GM18951 (cell line): ENCODE measurements at regions of chrX and their contacts with region 1.

Region 1: GRCh38 chrX:13087322-13088155 is 43.1 kb upstream of the FAM9C start:
- POLR2A ChIP-seq: no peak

Region 2: DNA sequence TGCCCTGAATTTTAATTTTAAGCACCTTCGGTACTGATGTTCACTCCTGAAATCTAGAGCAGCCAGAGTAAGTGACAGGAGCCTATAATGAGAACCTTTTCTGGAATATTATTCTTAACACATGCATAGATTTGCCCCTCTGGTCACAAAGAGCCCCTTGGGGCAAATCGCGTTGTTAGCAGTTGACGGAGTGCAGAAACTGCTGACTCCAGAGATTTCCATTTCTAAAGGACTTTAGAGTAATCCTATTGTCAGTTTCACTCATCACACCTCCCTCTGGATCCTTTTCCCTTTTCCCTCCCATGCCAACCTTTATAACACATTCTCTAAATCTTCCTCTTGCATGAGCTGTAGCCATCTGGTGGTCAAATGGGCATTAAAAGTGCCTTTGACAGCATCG is 561.2 kb before region 1 on chrX:
- in situ Hi-C with region 1: no loop called
- POLR2A ChIP-seq: no peak

Region 3: GRCh38 chrX:12955882-12956703 is 131.4 kb before region 1 on chrX:
- in situ Hi-C with region 1: loop called (anchors 5 kb)
- POLR2A ChIP-seq: peak; percentile 57

Region 4: GRCh38 chrX:13478740-13479451 is 391.4 kb after region 1 on chrX:
- in situ Hi-C with region 1: loop called (anchors 5 kb)
- POLR2A ChIP-seq: no peak